ENCODE measurements at regions of chr18 and their contacts with region 1.

Region 1: GRCh38 chr18:11437046-11437445 is 172.3 kb upstream of the SLC35G4 start:
- DNase-seq: no peak
- ATAC-seq: no peak
- H3K4me3 ChIP-seq: no peak overlapping the region
- H3K27ac ChIP-seq: no peak overlapping the region
- H3K4me1 ChIP-seq: no peaks in the 10 kb centered on the region
- H3K27me3 ChIP-seq: no peaks in the 10 kb centered on the region
- CTCF ChIP-seq: no peak

Region 2: DNA sequence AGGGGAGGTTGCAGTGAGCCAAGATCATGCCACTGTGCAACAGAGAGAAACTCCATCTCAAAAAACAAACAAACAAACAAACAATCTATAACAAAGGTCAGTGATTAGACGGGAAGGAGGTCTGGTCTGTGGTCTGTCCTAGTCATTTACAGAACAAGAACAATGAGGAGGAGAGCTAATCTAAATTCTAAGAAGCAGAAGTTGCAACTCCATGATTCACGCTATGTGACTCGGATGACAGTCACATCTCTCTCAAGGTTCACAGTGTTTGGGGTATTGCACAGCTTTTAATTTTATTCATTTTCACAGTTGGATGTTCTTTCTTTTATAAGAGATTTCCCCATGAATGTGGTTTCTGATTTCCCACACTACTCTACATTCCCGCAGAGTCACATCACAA is 69.0 kb before region 1 on chr18:
- intact Hi-C with region 1: loop called in 1 of 10 experiments (anchors 2 kb)
- DNase-seq: no peak
- ATAC-seq: no peak
- H3K4me3 ChIP-seq: no peak overlapping the region
- H3K27ac ChIP-seq: no peak overlapping the region
- H3K4me1 ChIP-seq: peaks cover 0 to 18% (median 7%) of the 10 kb centered on the region in 9 donors
- H3K27me3 ChIP-seq: no peaks in the 10 kb centered on the region
- CTCF ChIP-seq: no peak

Region 3: DNA sequence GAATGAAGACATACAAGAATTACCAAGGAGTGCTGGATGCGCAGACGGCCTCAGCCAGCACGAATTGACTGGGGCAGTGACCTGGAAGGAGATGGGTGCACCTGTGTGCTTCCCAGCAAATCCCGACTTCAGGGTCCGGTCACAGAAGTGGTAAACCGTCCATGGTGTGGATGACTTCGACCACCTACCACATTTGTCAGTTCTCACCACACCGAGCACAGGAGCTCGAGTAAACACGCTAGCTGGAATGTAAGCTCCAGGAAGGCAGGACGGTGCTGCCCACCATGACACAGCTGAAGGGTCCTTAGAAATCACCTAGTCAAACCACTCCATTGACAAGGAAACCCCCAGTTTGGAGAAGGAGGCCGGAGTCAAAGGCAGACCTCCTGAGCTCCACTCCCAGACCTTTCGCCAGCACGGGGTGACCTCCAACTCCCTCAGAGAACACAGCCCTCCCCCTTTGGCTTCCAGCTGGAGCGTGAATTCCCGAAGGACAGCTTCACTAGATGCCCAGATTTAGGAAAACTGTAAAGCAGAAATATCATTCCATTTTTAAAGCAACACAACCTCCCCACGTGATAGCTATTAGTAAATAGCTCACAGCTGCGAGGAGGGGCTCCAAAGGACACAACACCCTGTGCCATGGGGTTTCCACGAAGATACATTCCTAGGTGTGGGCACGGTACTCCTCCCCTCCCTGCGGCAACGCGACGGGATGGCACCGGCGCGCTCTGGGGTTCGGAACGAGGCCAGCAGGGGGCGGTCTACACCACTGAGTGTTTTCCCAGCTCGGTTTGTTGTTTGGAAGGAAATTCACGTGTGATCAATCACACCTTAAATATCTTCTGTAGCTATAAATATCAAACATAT is 217.9 kb after region 1 on chr18:
- intact Hi-C with region 1: no loop called
- DNase-seq: peak; percentile 45 to 67
- ATAC-seq: peak in 7 of 8 donors; percentile 55 to 80 (median 64)
- H3K4me3 ChIP-seq: no peak overlapping the region
- H3K27ac ChIP-seq: no peak overlapping the region
- H3K4me1 ChIP-seq: peaks cover 0 to 7% (median 0%) of the 10 kb centered on the region in 9 donors
- H3K27me3 ChIP-seq: peaks cover 0 to 38% (median 23%) of the 10 kb centered on the region in 7 donors
- CTCF ChIP-seq: peak; percentile 48 to 81 (median 75)